ENCODE measurements at regions of chr5 and their contacts with region 1.

Region 1: DNA sequence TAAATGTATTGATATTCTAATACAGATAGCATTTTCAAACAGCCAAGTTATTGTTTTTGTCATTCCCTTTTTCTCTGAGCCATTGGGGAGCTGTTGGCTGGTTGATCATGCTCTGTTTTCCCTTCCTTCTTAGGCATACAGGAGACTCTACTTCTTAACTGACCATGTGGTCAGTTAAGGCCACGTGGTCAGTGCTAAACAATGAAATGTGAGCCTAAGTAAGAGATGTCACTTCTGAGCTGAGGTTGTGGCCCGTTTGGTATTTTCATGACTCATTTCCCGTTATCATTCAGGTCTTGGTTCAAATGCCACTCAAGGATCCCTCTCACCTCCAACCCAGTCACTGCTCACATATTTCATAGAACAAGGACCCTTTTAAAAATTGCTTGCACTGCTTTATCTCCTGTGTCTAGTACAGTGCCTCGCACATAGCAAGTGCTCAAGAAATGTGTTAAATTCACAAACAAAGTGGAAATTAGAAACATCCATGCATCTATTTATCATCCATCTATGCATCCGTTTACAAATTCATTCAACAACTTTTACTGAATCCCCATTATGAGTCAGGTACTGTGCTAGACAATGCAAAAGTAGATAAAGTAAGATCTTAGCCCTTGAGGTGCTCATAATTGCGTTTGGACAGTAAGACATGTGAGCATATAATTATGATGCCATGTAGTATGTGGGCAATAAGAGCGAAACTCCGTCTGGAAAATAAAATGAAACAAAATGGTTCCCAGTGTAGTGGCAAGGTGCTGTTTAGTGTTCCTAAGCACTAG is 50.7 kb downstream of the ARRDC3 start:
- DNase-seq: peak; percentile 57
- ATAC-seq: peak; percentile 95
- H3K4me3 ChIP-seq: no peak overlapping the region
- H3K27ac ChIP-seq: no peak overlapping the region
- H3K4me1 ChIP-seq: peaks cover 9 to 22% of the 10 kb centered on the region in 2 experiments
- H3K27me3 ChIP-seq: no peaks in the 10 kb centered on the region
- CTCF ChIP-seq: no peak
- POLR2A ChIP-seq: no peak
- RAD21 ChIP-seq: no peak

Region 2: GRCh38 chr5:90809311-90810056 is 523.0 kb before region 1 on chr5:
- CTCF ChIA-PET with region 1: no interaction called
- POLR2A ChIA-PET with region 1: no interaction called
- RAD21 ChIA-PET with region 1: no interaction called
- intact Hi-C with region 1: no loop called
- DNase-seq: no peak
- ATAC-seq: no peak
- H3K4me3 ChIP-seq: no peak overlapping the region
- H3K27ac ChIP-seq: no peak overlapping the region
- H3K4me1 ChIP-seq: no peaks in the 10 kb centered on the region
- H3K27me3 ChIP-seq: no peaks in the 10 kb centered on the region
- CTCF ChIP-seq: no peak
- POLR2A ChIP-seq: no peak
- RAD21 ChIP-seq: no peak

Region 3: DNA sequence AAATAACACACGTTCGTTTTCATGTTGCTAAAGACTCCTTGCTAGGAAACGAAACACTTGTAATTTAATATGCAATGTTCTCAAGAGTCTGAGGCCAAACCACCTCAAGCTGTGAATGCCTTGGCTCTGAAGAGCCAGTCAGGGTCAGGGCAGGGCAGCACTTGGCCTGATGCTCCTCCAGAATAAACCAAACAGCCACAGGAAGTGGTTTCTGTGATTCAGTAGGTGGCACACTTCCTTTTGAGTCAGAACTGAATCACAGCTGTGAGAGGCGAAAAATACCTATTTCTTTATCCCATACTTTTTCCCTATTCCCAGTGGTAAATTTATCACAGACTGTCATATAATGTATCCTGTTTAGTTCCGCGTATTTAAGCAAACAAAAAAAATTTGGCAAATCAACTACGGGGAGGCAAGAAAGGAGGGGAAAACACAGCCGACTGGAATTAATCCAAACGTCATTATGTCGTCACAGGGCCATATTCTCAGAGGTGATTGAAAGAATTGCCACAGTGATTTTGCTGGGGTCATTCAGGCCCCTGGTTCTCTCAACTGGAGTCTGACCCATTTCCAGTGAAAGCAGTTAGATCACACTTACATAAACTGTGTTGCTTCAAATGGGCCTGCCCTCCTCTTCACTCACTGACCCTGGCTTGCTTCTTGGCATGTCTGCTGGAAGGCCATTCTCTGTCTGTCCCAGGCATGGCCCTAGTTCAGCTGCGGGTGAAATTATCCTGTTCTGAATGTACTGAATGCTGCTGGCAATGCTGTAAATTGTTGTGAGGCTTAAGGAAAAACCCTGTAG is 20.6 kb before region 1 on chr5:
- CTCF ChIA-PET with region 1: no interaction called
- POLR2A ChIA-PET with region 1: interaction called, 11 read pairs
- RAD21 ChIA-PET with region 1: no interaction called
- intact Hi-C with region 1: no loop called
- DNase-seq: peak; percentile 91
- ATAC-seq: peak; percentile 76
- H3K4me3 ChIP-seq: peak overlapping the region; percentile 0 to 32; a peak in 3 of 4 replicates
- H3K27ac ChIP-seq: peak overlapping the region; percentile 59
- H3K4me1 ChIP-seq: peaks cover 34 to 63% of the 10 kb centered on the region in 2 experiments
- H3K27me3 ChIP-seq: no peaks in the 10 kb centered on the region
- CTCF ChIP-seq: no peak
- POLR2A ChIP-seq: no peak
- RAD21 ChIP-seq: no peak